CD4-positive, alpha-beta T cell (primary cell): ENCODE measurements at regions of chr21 and their contacts with region 1.

Region 1: DNA sequence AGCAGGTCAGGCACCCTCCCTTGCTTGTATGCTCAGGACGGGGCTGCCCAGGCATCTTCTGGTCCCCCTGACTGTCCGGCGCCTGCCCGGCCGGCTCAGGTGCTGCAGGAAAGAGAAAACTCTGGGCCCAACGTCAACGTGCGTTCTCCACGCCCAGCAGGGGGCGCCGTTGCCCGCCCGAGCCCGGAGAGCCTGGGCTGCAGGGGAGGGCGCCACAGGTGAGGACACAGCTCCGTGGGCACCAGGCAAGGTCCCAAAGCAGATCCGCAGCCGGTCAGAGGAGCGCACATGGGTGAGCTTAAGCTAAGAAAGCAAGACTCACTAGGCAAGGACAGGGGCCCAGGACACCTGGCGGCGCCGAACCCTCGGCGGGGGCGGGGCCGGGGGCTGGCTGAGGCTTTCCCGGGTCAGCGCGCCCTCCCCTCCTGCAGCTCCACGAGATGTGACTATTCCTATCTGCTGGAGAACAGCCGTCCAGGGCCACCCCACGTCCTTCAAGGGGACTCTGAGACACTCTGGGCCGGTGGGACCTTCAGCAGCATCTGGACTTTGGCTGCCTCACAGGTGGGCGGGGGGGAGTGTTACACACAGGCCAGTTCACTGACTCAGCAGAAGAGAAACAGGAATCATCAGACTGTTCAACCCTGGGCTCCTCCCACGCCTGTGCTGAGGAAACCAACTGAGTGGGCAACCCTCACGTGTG is 29.3 kb downstream of the KRTAP10-1 start:
- DNase-seq: peak; percentile 68 to 91 (median 82)
- ATAC-seq: peak; percentile 96
- H3K4me3 ChIP-seq: peak overlapping the region; percentile 41
- H3K4me3 Mint-ChIP-seq: peak overlapping the region; percentile 42
- H3K27ac ChIP-seq: no peak overlapping the region
- H3K27ac Mint-ChIP-seq: no peak overlapping the region
- H3K4me1 ChIP-seq: peaks cover 12% of the 10 kb centered on the region
- H3K4me1 Mint-ChIP-seq: no peaks in the 10 kb centered on the region
- H3K27me3 ChIP-seq: no peaks in the 10 kb centered on the region
- H3K27me3 Mint-ChIP-seq: no peaks in the 10 kb centered on the region
- CTCF ChIP-seq: peak; percentile 96

Region 2: GRCh38 chr21:44742418-44743153 is 231.9 kb after region 1 on chr21:
- CTCF ChIA-PET with region 1: interaction called, 24 read pairs
- POLR2A ChIA-PET with region 1: interaction called, 14 read pairs
- intact Hi-C with region 1: loop called (anchors 1 kb)
- DNase-seq: peak in 4 of 14 experiments; percentile 25 to 63 (median 60)
- ATAC-seq: no peak
- H3K4me3 ChIP-seq: no peak overlapping the region
- H3K4me3 Mint-ChIP-seq: no peak overlapping the region
- H3K27ac ChIP-seq: no peak overlapping the region
- H3K27ac Mint-ChIP-seq: peak overlapping the region; percentile 47
- H3K4me1 ChIP-seq: no peaks in the 10 kb centered on the region
- H3K4me1 Mint-ChIP-seq: no peaks in the 10 kb centered on the region
- H3K27me3 ChIP-seq: no peaks in the 10 kb centered on the region
- H3K27me3 Mint-ChIP-seq: no peaks in the 10 kb centered on the region
- CTCF ChIP-seq: peak; percentile 55

Region 3: DNA sequence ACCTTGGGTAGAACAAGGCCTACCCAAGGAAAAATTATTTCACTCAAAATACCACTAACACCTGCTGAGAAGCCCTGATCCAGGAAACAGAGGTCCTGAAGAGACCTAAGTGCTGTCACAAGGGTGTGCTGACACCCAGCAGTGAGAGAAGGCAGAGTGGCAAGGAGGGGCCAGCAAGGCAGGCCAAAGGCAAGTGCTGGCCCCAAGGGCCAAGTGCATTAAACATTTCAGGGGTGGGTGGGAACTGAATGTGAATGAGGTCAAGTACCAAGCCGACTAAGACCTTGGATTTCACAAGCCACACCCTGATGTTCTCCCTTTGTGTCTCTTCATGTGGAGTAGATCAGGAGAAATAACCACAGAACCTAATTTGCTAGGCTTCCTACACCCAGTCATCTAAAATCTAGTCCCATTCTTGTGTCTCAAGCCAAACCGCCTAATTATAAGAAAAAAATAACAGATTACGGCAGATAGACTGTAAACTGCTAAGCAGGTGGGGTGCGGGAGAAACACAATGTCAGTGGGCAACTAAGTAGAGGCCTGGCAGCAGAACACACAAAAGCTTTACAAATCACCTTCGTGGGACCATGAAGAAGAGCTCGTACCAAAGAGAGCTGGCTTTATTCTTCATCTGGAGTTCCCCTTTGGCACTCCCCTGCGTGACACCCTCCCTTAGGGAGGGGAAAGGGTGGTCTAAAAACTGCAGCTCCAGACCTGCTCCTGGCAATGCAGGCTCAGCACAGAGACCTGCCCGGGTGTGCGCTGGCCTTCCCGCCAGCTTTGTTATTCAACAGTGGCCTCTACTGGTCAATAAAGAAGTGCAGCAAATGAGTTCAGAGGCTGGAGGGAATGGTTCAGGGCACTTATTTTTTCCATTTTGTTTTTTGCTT is 282.3 kb after region 1 on chr21:
- CTCF ChIA-PET with region 1: interaction called, 41 read pairs
- POLR2A ChIA-PET with region 1: interaction called, 5 read pairs
- intact Hi-C with region 1: loop called (anchors 1 kb)
- DNase-seq: peak; percentile 21 to 82 (median 44)
- ATAC-seq: peak; percentile 98
- H3K4me3 ChIP-seq: no peak overlapping the region
- H3K4me3 Mint-ChIP-seq: peak overlapping the region; percentile 9
- H3K27ac ChIP-seq: no peak overlapping the region
- H3K27ac Mint-ChIP-seq: peak overlapping the region; percentile 50
- H3K4me1 ChIP-seq: peaks cover 9% of the 10 kb centered on the region
- H3K4me1 Mint-ChIP-seq: peaks cover 56% of the 10 kb centered on the region
- H3K27me3 ChIP-seq: no peaks in the 10 kb centered on the region
- H3K27me3 Mint-ChIP-seq: no peaks in the 10 kb centered on the region
- CTCF ChIP-seq: peak; percentile 87

Region 4: DNA sequence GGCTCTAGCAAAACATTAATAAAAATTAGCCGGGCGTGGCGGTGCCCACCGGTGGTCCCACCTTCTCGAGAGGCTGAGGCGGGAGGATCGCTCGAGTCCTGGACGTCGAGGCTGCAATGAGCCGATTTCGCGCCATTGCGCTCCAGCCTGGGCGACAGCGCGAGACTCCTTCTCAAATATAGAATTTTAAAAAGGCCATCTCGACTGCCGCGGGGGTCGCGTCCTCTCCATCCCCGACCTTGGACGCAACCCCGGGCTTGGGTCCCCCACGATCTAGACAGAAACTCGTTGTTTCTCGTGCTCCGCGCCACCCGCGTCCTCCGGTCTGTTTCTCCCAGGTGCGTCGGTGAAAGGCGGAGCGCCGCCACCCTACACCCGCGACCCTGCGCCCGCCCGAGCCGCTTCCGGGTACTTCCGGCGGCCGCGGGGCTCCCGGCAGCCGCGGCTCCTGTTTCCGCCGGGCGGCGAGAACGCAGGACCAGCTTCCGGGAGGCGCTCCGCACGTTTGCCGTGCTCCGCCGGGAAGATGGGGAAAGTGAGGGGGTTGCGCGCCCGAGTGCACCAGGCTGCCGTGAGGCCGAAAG is 429.0 kb after region 1 on chr21 and contains the start of gene SLX9:
- CTCF ChIA-PET with region 1: no interaction called
- POLR2A ChIA-PET with region 1: no interaction called
- intact Hi-C with region 1: loop called in 1 of 2 experiments (anchors 5 kb)
- DNase-seq: peak; percentile 59 to 90 (median 76)
- ATAC-seq: peak; percentile 94
- H3K4me3 ChIP-seq: peak within 1 kb of the TSS; percentile 83
- H3K4me3 Mint-ChIP-seq: peak within 1 kb of the TSS; percentile 93
- H3K27ac ChIP-seq: peak within 1 kb of the TSS in 1 of 2 donors; percentile 18
- H3K27ac Mint-ChIP-seq: peak within 1 kb of the TSS; percentile 86
- H3K4me1 ChIP-seq: peaks cover 49% of the 10 kb centered on the region
- H3K4me1 Mint-ChIP-seq: peaks cover 38% of the 10 kb centered on the region
- H3K27me3 ChIP-seq: no peaks in the 10 kb centered on the region
- H3K27me3 Mint-ChIP-seq: no peaks in the 10 kb centered on the region
- CTCF ChIP-seq: no peak
- total RNA-seq, gene SLX9: 7.7 to 9.1 TPM